Colonic mucosa (tissue), 4 donors: ENCODE measurements at regions of chr11 and their contacts with region 1.

Region 1: GRCh38 chr11:24134879-24135588 is 361.8 kb upstream of the LUZP2 start:
- DNase-seq: no peak
- H3K4me3 ChIP-seq: no peak overlapping the region
- H3K27ac ChIP-seq: no peak overlapping the region
- H3K4me1 ChIP-seq: no peaks in the 10 kb centered on the region
- H3K27me3 ChIP-seq: no peaks in the 10 kb centered on the region
- CTCF ChIP-seq: no peak

Region 2: DNA sequence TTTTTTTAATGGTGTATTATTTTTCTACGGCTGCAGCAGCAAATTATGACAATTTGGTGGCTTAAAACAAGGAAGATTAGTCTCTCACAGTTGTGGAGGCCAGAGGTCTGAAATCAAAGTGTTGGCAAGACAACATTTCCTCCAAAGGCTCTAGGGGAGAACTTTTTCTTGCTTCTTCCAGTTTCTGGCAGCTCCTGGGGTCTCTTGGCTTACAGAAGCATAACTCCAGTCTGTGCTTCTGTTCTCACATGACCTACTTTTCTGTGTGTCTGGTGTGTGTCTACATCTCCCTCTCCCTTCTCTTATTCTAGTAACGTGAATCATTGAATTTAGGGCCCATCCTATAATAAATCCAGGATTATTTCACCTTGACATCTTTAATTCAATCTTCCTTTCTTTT is 190.1 kb before region 1 on chr11:
- intact Hi-C with region 1: no loop called
- DNase-seq: no peak
- H3K4me3 ChIP-seq: no peak overlapping the region
- H3K27ac ChIP-seq: no peak overlapping the region
- H3K4me1 ChIP-seq: no peaks in the 10 kb centered on the region
- H3K27me3 ChIP-seq: no peaks in the 10 kb centered on the region
- CTCF ChIP-seq: no peak

Region 3: DNA sequence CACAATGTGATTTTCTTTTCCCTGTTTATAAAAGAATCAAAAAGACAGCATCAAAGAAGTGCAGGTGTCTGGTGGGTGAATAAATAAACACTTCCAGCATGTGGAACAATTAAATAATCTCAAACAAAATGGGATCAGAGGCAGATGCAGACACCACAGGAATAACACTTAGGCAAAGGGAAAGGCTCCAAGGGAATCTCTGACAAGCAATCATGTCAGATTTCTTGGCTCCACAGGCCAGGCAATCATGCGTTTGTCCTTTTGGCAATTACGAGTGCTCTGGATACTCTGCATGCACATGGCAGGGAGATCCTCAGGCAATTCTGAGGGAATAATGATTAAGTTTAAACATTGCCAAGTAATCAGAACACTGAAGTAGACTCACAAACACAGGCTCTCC is 41.7 kb before region 1 on chr11:
- intact Hi-C with region 1: loop called (anchors 2 kb)
- DNase-seq: no peak
- H3K4me3 ChIP-seq: no peak overlapping the region
- H3K27ac ChIP-seq: no peak overlapping the region
- H3K4me1 ChIP-seq: no peaks in the 10 kb centered on the region
- H3K27me3 ChIP-seq: no peaks in the 10 kb centered on the region
- CTCF ChIP-seq: no peak

Region 4: GRCh38 chr11:24234822-24235508 is 99.9 kb after region 1 on chr11:
- intact Hi-C with region 1: no loop called
- DNase-seq: peak; percentile 20
- H3K4me3 ChIP-seq: no peak overlapping the region
- H3K27ac ChIP-seq: no peak overlapping the region
- H3K4me1 ChIP-seq: no peaks in the 10 kb centered on the region
- H3K27me3 ChIP-seq: no peaks in the 10 kb centered on the region
- CTCF ChIP-seq: no peak